Activated CD4-positive, alpha-beta memory T cell treated with anti-CD3 and anti-CD28 coated beads, Interleukin-2, amount 10 ng/mL, durations not matched to agents 7 days and 5 days (primary cell): ENCODE measurements at regions of chr1 and their contacts with region 1.

Region 1: GRCh38 chr1:2314803-2315673 is 76.3 kb downstream of the MORN1 start:
- DNase-seq: peak; percentile 61
- H3K4me3 Mint-ChIP-seq: peak overlapping the region; percentile 27
- H3K27ac Mint-ChIP-seq: no peak overlapping the region
- H3K4me1 Mint-ChIP-seq: peaks cover 15% of the 10 kb centered on the region
- H3K27me3 Mint-ChIP-seq: no peaks in the 10 kb centered on the region

Region 2: DNA sequence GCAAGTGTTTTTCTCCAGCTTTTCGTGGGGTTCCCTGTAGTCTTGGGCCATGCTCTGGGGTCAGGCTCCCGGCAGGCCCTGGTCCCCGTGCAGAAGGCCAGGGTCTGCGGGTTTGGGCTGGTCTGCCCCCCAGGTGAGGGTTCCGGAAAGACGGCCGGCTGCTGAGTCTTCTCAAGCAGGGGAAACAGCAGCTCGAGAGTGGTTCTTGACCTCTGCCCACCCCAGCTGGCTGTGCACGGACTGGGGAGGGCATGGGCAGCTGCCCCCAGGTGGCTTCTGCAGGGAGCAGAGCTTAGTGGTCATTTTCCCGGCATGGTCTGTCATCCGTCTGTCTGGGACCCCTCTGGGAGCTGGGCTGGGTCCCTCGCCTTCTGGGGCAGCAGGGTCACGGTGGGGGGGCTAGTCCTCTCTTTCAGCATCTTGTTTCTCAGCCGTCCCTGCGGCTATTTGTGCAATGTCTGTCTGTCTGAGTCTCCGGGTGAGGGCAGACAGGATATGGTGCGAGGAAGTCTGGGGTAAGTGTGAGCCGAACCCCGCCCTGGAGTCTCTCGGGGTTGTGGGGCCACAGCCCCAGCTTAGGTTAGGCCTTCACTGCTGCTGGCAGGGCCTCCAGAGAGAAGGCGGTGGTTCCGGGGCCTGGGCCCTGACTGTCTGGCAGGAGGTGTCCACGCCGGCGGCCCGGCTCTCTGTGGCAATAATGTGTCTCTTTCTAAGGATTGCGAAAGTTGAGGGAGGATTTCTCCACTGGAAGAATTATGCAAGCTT is 80.9 kb before region 1 on chr1:
- CTCF ChIA-PET with region 1: interaction called, 10 read pairs
- POLR2A ChIA-PET with region 1: interaction called, 10 read pairs
- DNase-seq: peak; percentile 86
- H3K4me3 Mint-ChIP-seq: peak overlapping the region; percentile 98
- H3K27ac Mint-ChIP-seq: peak overlapping the region; percentile 90
- H3K4me1 Mint-ChIP-seq: peaks cover 67% of the 10 kb centered on the region
- H3K27me3 Mint-ChIP-seq: no peaks in the 10 kb centered on the region

Region 3: DNA sequence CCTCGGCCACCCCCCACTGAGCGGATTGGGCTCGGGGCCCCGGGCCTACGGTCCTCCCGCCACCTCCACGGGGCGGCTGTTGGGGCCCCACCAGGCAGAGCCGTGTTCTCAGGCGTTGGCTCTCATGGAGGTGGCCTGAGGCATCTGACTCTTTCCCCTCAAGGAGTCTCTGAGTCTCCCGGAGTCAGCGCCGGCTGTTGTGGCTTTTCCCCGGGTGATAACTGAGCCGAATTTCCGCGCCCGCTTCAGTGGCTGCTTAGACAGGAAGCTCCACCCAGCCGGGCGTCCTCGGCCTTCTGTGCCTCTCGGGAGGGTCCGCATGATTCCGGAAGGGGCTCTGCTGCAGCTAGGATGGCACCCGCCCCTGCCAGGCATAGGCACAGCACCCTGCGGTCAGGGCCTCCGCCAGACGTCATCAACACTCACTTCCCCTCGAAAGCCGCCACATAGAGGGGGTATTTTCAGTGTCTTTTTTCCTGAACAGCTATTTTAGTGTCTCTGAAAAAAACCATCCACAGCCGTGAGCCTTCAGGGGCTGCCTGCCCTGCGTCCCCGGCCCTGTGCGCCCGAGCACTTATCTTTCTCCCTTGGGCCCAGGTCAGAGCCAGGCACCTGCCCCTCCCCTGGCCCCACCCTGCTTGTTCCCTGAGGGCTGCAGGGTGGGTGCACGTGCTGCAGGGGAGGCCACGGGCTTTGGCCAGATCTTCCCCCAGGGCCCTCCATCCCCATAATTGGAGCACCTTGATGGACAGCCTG is 14.0 kb before region 1 on chr1:
- CTCF ChIA-PET with region 1: interaction called, 11 read pairs
- POLR2A ChIA-PET with region 1: interaction called, 49 read pairs
- DNase-seq: peak; percentile 95
- H3K4me3 Mint-ChIP-seq: peak overlapping the region; percentile 71
- H3K27ac Mint-ChIP-seq: peak overlapping the region; percentile 97
- H3K4me1 Mint-ChIP-seq: peaks cover 68% of the 10 kb centered on the region
- H3K27me3 Mint-ChIP-seq: no peaks in the 10 kb centered on the region